Endothelial cell of umbilical vein (primary cell): ENCODE measurements at regions of chr20 and their contacts with region 1.

Region 1: DNA sequence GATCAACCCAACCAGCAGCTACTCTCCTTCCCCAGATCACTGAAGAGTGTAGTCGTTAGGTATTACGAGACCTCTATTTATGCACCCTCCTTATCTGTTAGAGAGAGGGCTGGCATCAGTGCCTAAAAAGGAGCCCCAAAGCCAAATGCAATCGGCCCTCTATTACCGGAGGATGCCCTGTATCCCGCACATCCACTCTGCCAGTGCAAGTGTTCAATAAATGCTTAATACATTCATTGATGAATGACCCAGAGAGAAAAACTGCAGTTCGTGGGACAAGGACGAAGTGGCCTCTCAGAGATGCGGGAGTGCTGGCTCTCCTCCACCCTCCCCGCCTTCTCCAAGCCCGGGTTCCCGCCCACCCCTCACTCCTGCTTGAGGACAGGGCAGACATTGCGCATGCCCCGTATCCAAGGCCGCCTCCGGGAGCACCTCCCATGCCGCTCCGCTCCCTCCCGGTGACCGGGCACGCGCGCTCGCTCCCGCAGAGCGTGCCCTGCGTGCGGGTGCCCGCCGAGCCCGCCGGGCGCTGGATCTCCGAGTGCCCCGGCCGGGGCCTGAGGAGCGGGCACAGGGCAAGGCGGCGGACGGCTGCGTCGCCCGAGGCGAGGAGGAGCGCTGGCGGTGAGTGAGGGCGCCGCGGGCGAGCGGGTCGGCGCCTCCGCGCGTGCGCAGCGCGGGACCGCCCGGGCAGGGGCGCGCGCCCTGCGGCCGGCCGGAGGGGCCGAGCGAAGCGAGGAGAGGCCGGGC is 27.2 kb upstream of the BTBD3 start:
- DNase-seq: peak; percentile 95
- H3K4me3 ChIP-seq: peak overlapping the region; percentile 64 to 85 (median 70)
- H3K27ac ChIP-seq: peak overlapping the region; percentile 62
- H3K4me1 ChIP-seq: peaks cover 19% of the 10 kb centered on the region
- H3K27me3 ChIP-seq: peaks cover 0 to 13% of the 10 kb centered on the region in 2 experiments
- CTCF ChIP-seq: no peak
- POLR2A ChIP-seq: no peak

Region 2: DNA sequence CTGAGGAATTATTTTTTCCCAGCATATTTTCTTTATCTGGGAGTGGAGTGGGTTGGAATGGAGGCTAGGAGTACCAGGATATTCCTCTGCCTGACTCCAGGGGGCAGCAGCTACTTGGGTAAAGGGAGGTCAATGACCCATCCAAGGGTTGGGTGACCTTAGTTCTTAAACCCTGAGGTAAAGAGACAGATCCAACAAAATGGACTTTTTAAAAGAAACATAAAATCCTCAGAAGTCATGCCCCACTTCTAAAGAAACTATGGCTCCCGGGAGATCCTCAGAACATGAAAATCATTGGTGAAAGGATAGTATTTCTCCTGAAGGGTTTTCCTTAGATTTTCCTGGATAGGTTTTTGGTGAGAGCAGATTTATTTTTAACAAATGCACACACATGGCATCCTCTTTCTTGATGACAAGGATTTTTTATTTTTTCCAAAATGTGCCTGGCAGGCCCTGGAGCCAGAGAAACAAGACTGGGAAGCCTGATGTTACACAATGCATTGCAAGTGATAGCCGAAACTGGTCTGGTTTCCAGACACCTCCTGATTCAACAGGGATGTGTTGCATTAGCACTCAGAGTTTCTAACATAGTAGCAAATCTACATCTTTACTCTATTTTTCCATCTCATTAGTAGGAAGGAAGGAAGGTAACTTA is 213.7 kb before region 1 on chr20:
- CTCF ChIA-PET with region 1: no interaction called
- POLR2A ChIA-PET with region 1: no interaction called
- dilution Hi-C with region 1: no loop called
- intact Hi-C with region 1: loop called (anchors 1 kb)
- DNase-seq: peak; percentile 51
- H3K4me3 ChIP-seq: no peak overlapping the region
- H3K27ac ChIP-seq: no peak overlapping the region
- H3K4me1 ChIP-seq: no peaks in the 10 kb centered on the region
- H3K27me3 ChIP-seq: peaks cover 0 to 5% of the 10 kb centered on the region in 2 experiments
- CTCF ChIP-seq: peak; percentile 70 to 75
- POLR2A ChIP-seq: no peak

Region 3: GRCh38 chr20:11912013-11912658 is 21.6 kb after region 1 on chr20:
- CTCF ChIA-PET with region 1: no interaction called
- POLR2A ChIA-PET with region 1: no interaction called
- dilution Hi-C with region 1: no loop called
- intact Hi-C with region 1: no loop called
- DNase-seq: peak; percentile 16
- H3K4me3 ChIP-seq: no peak overlapping the region
- H3K27ac ChIP-seq: no peak overlapping the region
- H3K4me1 ChIP-seq: no peaks in the 10 kb centered on the region
- H3K27me3 ChIP-seq: no peaks in the 10 kb centered on the region
- CTCF ChIP-seq: peak; percentile 11 to 32
- POLR2A ChIP-seq: no peak

Region 4: DNA sequence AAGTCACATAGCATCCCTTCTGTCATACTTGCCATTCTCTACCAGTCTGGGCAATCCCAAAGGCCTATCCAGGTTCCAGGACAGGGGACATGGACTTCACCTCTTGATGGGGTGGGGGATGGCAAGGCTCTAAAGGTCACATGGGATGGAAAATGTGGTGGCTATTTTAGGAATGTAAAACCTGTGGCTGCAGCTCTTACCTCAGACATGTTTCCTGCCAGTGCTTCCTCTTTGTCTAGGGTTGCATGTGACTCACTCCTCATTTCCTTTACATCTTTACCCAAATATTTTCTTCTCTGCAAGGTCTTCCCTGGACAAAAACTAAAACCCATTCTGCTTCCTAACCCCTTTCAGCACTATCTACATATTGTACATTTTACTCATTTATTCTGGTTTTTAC is 162.8 kb after region 1 on chr20:
- CTCF ChIA-PET with region 1: no interaction called
- POLR2A ChIA-PET with region 1: no interaction called
- dilution Hi-C with region 1: no loop called
- intact Hi-C with region 1: loop called (anchors 2 kb)
- DNase-seq: peak; percentile 90
- H3K4me3 ChIP-seq: no peak overlapping the region
- H3K27ac ChIP-seq: peak overlapping the region; percentile 90
- H3K4me1 ChIP-seq: peaks cover 34% of the 10 kb centered on the region
- H3K27me3 ChIP-seq: no peaks in the 10 kb centered on the region
- CTCF ChIP-seq: no peak
- POLR2A ChIP-seq: no peak

Region 5: GRCh38 chr20:13221673-13222318 is 1331.3 kb after region 1 on chr20:
- CTCF ChIA-PET with region 1: no interaction called
- POLR2A ChIA-PET with region 1: no interaction called
- dilution Hi-C with region 1: no loop called
- intact Hi-C with region 1: loop called (anchors 5 kb)
- DNase-seq: peak; percentile 32
- H3K4me3 ChIP-seq: peak overlapping the region in 1 of 3 experiments; percentile 24
- H3K27ac ChIP-seq: no peak overlapping the region
- H3K4me1 ChIP-seq: no peaks in the 10 kb centered on the region
- H3K27me3 ChIP-seq: peaks cover 46 to 78% of the 10 kb centered on the region in 2 experiments
- CTCF ChIP-seq: peak in 1 of 2 donors; percentile 10
- POLR2A ChIP-seq: no peak